GM10248 (cell line): ENCODE measurements at regions of chr2 and their contacts with region 1.

Region 1: GRCh38 chr2:179020156-179020750 is 29.7 kb downstream of the CCDC141 start:
- DNase-seq: peak; percentile 23
- CTCF ChIP-seq: peak; percentile 65

Region 2: DNA sequence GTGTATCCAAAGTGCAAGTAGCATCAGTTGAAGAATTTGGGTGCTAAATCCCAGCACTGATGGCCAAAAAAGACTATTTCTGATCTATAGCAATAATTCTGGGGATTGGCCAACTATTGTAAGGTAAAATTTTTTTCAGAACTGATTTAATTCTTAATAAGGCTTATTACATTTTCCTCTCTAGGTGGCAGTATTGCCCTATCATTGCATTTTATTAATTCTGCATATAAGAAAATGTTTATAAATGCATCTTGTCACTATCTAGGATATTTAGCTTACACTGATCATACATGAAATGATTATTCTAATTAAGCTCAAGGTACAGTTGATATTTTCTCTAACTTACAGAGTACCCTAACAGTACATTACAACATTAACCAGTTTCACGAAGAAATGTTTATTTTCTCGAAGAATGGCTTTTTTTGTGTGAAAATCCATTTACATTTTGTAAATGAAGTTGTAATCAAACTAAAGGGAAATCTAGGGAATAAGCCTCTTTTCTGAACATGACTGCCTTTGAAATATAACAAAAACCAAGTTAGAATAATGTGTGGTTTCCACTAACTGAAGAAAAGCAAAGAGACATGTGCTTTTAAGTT is 224.1 kb before region 1 on chr2:
- CTCF ChIA-PET with region 1: interaction called, 12 read pairs
- POLR2A ChIA-PET with region 1: no interaction called
- DNase-seq: peak; percentile 46
- CTCF ChIP-seq: peak; percentile 49

Region 3: DNA sequence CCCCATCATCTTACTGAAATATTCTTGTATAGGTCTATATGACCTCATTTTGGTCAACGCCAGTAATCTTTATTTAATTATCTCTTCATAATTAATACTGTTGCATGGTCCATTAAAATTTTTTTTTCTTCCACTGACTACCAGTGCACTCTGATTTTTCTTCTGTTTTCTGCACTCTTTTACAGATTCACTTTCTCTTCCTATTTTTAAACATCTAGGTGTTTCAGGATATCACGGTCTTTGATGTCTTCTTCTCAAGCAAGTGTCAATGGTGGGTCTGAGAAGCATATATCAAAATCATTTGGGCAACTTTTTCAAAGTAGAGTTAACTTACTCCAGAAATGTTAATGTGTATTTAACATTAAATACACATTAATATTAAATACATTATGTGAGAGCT is 21.7 kb before region 1 on chr2:
- CTCF ChIA-PET with region 1: interaction called, 20 read pairs
- POLR2A ChIA-PET with region 1: no interaction called
- DNase-seq: no peak
- CTCF ChIP-seq: no peak

Region 4: DNA sequence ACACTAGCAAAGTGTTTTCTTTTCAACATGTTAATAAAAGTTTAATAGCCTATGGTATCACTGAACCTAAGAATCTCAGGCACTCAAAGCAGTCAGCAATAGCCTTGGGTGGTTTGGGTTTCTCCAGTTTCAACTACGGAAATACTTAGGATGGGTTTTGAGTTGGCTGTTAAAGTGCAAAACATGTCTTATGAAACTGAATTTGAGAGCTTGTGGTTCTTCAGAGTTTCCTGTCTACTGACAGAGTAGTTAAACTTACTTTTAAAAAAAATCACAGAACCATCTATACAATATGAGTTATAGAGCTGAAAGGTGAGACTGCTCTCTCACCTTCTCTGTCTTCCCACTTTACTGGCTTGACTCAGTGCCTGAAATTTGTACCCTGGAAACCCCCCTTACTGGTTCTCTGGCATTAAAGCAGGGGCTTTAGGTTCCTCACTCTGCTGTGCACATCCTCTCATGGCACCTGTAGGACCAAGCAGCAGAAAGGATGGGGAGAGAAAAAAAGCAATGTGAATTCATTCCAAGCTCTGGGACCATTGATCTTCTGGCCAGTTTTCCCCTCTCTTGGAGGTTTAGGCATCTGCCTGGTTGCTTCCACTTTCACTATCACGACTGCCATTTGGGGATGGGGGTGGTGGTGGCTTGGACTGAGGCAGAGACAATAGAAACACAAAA is 11.6 kb after region 1 on chr2:
- CTCF ChIA-PET with region 1: interaction called, 68 read pairs
- POLR2A ChIA-PET with region 1: interaction called, 4 read pairs
- DNase-seq: peak; percentile 29
- CTCF ChIP-seq: no peak

Region 5: GRCh38 chr2:179129574-179130238 is 109.5 kb after region 1 on chr2:
- CTCF ChIA-PET with region 1: interaction called, 22 read pairs
- POLR2A ChIA-PET with region 1: no interaction called
- DNase-seq: peak; percentile 24
- CTCF ChIP-seq: peak; percentile 58

Region 6: GRCh38 chr2:179170901-179171300 is 150.6 kb after region 1 on chr2:
- CTCF ChIA-PET with region 1: no interaction called
- POLR2A ChIA-PET with region 1: no interaction called
- DNase-seq: no peak
- CTCF ChIP-seq: no peak

Region 7: GRCh38 chr2:179211355-179211754 is 191.1 kb after region 1 on chr2:
- CTCF ChIA-PET with region 1: no interaction called
- POLR2A ChIA-PET with region 1: no interaction called
- DNase-seq: no peak
- CTCF ChIP-seq: no peak